Right cardiac atrium (tissue), 5 donors: ENCODE measurements at regions of chr17 and their contacts with region 1.

Region 1: DNA sequence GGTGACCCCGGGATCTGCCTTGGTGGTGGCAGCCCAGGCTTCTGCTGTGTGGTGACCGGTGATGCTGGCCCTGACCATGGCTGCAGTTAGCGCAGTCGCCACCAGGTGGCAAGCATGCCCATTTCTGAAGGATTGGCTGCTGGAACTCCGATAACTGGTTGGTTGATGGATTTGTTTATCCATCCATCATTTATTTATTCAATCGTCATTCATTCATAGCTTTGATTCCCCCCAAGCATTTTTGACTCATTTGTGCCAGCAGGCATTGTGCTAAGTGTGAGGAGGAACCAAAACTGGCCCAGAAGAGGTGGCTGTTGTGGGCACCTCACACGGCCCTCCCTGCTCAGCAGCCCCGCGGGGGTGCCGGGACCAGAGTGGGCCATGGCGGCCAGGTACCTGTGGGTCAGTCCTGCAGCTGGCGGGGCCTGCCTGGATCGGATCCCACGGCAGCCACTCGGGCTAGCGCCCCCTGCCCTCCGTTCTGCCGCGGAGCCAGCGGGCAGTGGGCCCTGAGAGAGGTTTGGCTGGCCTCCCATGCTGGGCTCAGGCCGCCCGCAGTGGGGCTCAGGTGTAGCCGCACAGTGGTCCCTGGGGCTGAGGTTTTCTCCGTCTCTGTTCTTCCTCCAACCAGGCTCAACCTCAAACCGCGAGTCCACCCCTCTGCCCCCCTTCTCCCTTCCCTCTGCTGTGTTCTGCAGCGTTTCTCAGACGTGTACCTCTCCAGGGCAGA is 28.8 kb upstream of the ITGA3 start:
- DNase-seq: peak; percentile 82 to 94 (median 93)
- ATAC-seq: peak; percentile 78 to 84
- H3K4me3 ChIP-seq: no peak overlapping the region
- H3K27ac ChIP-seq: no peak overlapping the region
- H3K4me1 ChIP-seq: no peaks in the 10 kb centered on the region
- H3K27me3 ChIP-seq: no peaks in the 10 kb centered on the region

Region 2: DNA sequence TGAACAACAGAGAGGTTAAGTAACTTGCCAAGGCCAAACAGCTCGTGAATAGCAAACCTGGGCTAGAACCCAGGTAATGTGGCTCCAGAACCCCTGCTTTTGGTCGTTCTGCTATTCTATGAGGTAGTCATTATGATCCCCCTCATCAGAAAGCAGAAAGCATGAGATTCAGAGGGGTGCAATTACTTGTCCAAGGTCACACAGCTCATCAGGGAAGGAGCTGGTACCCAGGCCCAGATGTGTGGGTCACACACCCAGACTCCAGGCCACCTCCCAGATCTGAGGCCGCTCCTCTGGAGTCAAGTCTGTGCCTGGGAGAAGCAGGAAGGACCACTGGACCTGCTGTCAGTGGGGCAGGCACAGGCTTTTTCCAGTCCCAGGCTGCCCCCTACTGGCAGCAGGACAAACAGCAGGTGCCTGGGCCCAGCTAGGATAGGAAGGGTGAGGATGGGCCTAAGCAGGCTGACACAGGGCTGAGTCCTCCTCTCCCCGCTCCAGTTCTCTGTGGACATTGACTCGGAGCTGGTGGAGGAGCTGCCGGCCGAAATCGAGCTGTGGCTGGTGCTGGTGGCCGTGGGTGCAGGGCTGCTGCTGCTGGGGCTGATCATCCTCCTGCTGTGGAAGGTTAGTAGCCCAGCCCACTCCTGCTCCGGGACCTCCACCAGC is 60.3 kb after region 1 on chr17:
- intact Hi-C with region 1: loop called (anchors 2 to 5 kb)
- DNase-seq: peak; percentile 73 to 88 (median 85)
- ATAC-seq: peak; percentile 80 to 88
- H3K4me3 ChIP-seq: no peak overlapping the region
- H3K27ac ChIP-seq: no peak overlapping the region
- H3K4me1 ChIP-seq: no peaks in the 10 kb centered on the region
- H3K27me3 ChIP-seq: no peaks in the 10 kb centered on the region

Region 3: GRCh38 chr17:50297407-50297865 is 270.4 kb after region 1 on chr17:
- intact Hi-C with region 1: loop called in 1 of 4 experiments (anchors 10 kb)
- DNase-seq: peak; percentile 77 to 89 (median 88)
- ATAC-seq: peak; percentile 86 to 94
- H3K4me3 ChIP-seq: no peak overlapping the region
- H3K27ac ChIP-seq: no peak overlapping the region
- H3K4me1 ChIP-seq: no peaks in the 10 kb centered on the region
- H3K27me3 ChIP-seq: no peaks in the 10 kb centered on the region